ENCODE measurements at regions of chr1 and their contacts with region 1.

Region 1: DNA sequence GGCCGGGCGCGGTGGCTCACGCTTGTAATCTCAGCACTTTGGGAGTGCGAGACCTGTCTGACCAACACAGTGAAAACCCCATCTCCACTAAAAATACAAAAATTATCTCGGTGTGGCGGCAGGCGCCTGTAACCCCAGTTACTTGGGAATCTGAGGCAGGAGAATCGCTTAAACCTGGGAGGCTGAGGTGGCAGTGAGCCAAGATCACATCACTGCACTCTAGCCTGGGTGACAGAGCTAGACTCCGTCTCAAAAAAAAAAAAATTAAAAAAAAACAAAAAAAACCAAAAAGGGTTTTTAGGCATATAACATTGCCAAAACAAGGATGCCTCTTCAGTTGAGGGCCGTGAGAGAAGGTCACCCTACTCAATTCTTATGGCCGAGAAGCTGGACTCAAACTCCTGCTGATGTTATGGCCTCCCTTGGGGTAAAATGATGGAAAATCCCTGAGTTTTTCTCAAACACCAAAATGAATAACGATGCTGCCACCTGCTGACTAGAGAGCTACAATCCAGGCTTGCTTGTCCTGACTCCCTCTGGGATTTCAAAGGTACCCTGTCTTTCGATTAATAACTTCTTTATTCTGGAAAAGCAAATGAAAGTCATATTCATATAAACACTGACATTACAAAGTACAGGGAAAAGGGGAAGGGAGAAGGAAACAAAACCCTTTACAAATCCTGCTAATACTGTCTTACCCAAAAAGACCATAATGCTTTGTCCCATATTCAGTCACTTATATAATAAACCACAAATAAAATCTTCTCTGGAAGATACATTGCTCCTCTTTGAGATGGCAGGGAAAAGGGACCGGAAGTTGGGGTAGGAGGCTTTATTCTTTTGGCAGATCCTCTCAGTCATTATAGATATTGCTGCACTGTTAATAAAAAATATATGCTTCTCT is 10.7 kb downstream of the RAB42 start:
- DNase-seq: peak; percentile 60
- ATAC-seq: no peak
- H3K4me3 Mint-ChIP-seq: no peak overlapping the region
- H3K27ac Mint-ChIP-seq: no peak overlapping the region
- H3K4me1 Mint-ChIP-seq: peaks cover 13% of the 10 kb centered on the region
- H3K27me3 Mint-ChIP-seq: no peaks in the 10 kb centered on the region

Region 2: GRCh38 chr1:28359592-28360239 is 243.1 kb before region 1 on chr1:
- CTCF ChIA-PET with region 1: interaction called, 3 read pairs
- POLR2A ChIA-PET with region 1: no interaction called
- intact Hi-C with region 1: loop called in 1 of 2 experiments (anchors 1 kb)
- DNase-seq: peak; percentile 88
- ATAC-seq: peak; percentile 78
- H3K4me3 Mint-ChIP-seq: no peak overlapping the region
- H3K27ac Mint-ChIP-seq: no peak overlapping the region
- H3K4me1 Mint-ChIP-seq: no peaks in the 10 kb centered on the region
- H3K27me3 Mint-ChIP-seq: no peaks in the 10 kb centered on the region

Region 3: GRCh38 chr1:28409090-28409489 is 193.7 kb before region 1 on chr1:
- CTCF ChIA-PET with region 1: interaction called, 10 read pairs
- POLR2A ChIA-PET with region 1: no interaction called
- intact Hi-C with region 1: loop called in 1 of 2 experiments (anchors 2 kb)
- DNase-seq: no peak
- ATAC-seq: no peak
- H3K4me3 Mint-ChIP-seq: no peak overlapping the region
- H3K27ac Mint-ChIP-seq: no peak overlapping the region
- H3K4me1 Mint-ChIP-seq: peaks cover 2% of the 10 kb centered on the region
- H3K27me3 Mint-ChIP-seq: no peaks in the 10 kb centered on the region

Region 4: GRCh38 chr1:28565040-28565439 is 37.7 kb before region 1 on chr1:
- CTCF ChIA-PET with region 1: no interaction called
- POLR2A ChIA-PET with region 1: no interaction called
- intact Hi-C with region 1: no loop called
- DNase-seq: no peak
- ATAC-seq: no peak
- H3K4me3 Mint-ChIP-seq: no peak overlapping the region
- H3K27ac Mint-ChIP-seq: no peak overlapping the region
- H3K4me1 Mint-ChIP-seq: no peaks in the 10 kb centered on the region
- H3K27me3 Mint-ChIP-seq: no peaks in the 10 kb centered on the region

Measured in activated CD4-positive, alpha-beta T cell treated with anti-CD3 and anti-CD28 coated beads for 36 hours (primary cell).